OCI-LY7 (cell line): ENCODE measurements at regions of chr17 and their contacts with region 1.

Region 1: GRCh38 chr17:16537130-16537458 is 31.9 kb downstream of the ZNF287 start:
- DNase-seq: no peak
- H3K4me3 ChIP-seq: no peak overlapping the region
- H3K27ac ChIP-seq: no peak overlapping the region
- H3K4me1 ChIP-seq: peaks cover 14% of the 10 kb centered on the region
- CTCF ChIP-seq: peak; percentile 41; the same call in 1 of the 2 replicates

Region 2: DNA sequence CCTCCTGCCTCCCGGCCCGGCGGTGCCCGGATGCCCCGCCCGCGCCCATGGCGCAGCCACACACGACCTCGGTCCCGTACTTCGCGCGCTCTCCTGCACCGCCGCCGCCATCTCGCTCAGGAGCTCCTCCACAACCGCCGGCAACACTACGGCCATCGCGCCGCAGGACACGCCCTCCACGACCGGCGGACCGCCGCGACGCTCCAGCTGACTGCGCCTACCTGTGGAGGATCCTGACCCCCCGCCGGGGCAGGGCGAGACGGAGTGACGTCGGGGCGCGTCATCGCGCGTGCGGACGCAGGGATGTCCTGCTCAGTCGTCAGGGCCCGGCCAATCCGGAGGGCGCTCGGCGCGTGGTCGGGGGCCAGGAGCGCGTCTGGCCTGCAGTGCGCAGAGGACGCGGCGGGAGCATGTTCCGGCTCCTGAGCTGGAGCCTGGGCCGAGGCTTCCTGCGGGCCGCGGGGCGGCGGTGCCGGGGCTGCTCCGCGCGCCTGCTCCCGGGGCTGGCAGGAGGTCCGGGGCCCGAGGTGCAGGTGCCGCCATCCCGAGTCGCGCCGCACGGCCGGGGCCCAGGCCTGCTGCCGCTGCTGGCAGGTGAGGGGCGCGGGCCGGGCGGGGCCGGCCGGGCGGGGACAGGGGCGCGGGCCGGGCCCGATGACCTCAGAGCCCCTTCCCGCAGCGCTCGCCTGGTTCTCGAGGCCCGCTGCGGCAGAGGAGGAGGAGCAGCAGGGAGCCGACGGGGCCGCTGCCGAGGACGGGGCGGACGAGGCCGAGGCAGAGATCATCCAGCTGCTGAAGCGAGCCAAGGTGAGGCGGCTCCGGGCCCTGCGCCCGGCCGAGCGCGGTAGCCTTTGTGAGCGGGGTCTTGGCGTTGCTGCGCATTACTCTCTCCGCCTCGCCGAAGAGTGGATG is 537.4 kb before region 1 on chr17 and contains the starts of genes TTC19 and ZSWIM7:
- CTCF ChIA-PET with region 1: no interaction called
- POLR2A ChIA-PET with region 1: no interaction called
- intact Hi-C with region 1: loop called (anchors 2 kb)
- DNase-seq: peak; percentile 96
- H3K4me3 ChIP-seq: peak within 1 kb of the TSS; percentile 94
- H3K27ac ChIP-seq: peak within 1 kb of the TSS; percentile 85
- H3K4me1 ChIP-seq: peaks cover 14% of the 10 kb centered on the region
- CTCF ChIP-seq: no peak
- total RNA-seq, gene TTC19: 42.0 and 57.3 TPM in 2 replicates
- total RNA-seq, gene ZSWIM7: 27.2 and 34.7 TPM in 2 replicates

Region 3: DNA sequence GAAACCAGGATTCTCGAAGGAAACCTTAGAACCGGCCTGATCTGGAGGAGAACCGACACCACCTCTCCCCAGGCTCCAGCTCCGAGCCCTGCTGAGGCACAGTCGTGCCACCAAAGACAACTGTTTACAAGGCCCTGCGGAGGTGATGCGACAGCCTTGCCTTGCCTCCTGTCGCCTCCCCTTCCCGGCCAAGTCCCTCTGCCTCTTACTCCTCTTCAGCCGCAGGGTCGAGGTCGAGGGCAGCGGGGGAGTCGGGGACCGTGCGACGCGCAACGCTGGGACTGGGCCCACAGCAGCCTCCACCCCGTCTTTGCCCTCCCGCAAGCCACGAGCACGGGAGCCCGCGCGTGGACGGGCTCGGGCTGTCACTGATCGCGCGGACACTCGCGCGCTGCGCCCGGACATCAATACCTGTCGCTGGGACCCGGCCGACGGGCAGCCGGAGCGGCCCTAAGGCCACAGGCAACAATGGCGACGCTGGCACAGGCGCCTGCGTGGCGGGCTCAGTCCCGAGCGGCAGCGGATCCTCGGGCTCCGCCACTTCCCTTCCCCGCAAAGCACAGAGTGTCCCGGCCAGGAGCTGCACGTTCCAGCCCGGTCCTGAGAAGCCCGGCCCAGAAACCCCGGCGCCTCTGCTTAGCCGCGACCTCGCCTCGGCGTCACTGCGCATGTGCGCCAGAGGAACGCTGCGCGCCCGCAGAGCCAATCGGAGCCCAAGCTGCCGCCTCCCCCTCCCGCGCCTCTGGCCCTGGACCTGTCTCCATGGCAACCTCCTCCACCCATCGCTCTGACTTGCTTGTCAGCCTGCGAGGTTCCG is 31.7 kb after region 1 on chr17 and contains the start of gene ZNF287:
- CTCF ChIA-PET with region 1: no interaction called
- POLR2A ChIA-PET with region 1: interaction called, 13 read pairs
- intact Hi-C with region 1: no loop called
- DNase-seq: peak; percentile 89
- H3K4me3 ChIP-seq: peak within 1 kb of the TSS; percentile 70
- H3K27ac ChIP-seq: no peak within 1 kb of the TSS
- H3K4me1 ChIP-seq: peaks cover 8% of the 10 kb centered on the region
- CTCF ChIP-seq: no peak
- total RNA-seq, gene ZNF287: 4.5 and 8.5 TPM in 2 replicates

Region 4: DNA sequence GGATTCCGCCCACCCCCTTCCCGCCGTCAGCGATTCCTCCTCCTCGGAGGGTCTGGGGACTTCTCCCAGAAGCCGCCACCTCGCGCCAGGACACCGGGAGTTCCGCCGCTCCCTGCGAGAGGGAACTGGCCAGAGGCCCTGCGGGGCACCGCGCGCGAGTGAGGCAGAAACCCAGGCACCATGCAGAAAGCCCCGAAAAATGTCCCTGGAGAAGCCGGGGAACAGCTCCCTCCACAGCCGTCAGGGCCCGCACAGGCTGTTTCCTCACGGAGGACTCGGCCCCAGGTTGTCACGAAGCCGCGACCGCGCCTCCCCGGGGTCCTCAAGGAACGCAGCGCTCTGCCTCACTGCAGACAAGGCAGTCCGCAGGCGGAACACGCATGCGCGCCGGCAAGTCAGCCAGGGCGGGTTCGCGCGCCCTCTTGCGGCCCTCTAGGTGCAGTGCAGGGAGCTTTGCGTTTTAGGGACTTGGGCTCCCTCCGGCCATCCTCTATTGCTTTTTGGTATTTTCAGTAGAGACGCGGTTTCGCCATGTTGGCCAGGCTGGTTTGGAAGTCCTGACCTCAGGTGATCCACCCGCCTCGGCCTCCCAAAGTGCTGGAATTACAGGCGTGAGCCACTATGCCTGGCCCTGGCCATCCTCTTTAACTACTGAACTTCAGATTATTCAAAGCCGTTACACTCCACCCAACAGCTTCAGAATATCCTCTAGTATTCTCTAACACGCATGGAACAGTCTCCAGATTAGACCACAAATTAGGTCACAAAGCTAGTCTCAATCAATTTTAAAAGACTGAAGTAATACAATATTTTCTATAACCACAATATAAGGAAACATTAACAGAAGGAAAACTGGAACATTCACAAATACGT is 52.2 kb after region 1 on chr17:
- CTCF ChIA-PET with region 1: no interaction called
- POLR2A ChIA-PET with region 1: no interaction called
- intact Hi-C with region 1: loop called (anchors 2 kb)
- DNase-seq: peak; percentile 74
- H3K4me3 ChIP-seq: no peak overlapping the region
- H3K27ac ChIP-seq: no peak overlapping the region
- H3K4me1 ChIP-seq: no peaks in the 10 kb centered on the region
- CTCF ChIP-seq: peak; percentile 86

Region 5: DNA sequence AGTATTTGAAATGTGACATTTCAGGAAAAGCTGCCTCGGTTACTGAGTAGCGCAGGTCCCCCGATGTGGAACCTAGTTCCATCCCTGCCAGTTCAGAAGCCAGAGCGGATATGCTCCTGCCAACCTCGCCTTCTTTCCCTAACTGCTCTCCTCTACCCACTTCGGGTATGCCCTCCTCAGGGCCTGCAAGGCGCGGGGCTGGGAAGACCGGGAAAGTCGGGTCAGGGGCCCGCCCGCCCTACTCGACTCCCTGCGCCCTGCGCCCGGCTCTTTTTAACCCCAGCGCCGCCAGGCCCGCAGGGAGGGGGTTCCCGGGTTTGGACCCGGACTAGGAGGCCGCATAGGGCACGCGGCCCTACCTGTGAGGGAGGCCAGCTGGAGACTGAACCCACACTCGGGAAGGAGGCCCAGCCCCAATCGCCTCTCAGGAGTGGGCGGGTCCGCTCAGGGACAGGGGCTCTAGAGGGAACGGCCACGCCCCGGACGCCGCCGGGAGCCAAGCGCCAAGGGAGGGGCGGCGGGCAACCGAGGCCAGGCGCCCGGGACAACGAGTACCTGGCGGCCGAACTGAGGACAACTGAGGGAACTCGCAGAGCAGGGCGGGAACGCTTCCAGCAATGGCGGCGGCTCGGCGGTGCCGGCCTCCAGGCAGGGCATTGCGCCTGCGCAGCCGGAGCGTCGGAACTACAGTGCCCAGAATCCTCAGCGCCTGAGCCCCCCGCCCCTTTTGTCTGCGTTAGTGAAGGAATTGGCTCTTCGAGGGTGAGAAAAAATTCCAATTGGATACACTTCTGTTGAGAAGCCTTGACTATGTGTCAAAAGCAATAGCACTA is 116.3 kb after region 1 on chr17 and contains the start of gene ZNF624:
- CTCF ChIA-PET with region 1: no interaction called
- POLR2A ChIA-PET with region 1: no interaction called
- intact Hi-C with region 1: loop called (anchors 10 kb)
- DNase-seq: peak; percentile 93
- H3K4me3 ChIP-seq: peak within 1 kb of the TSS; percentile 84
- H3K27ac ChIP-seq: peak within 1 kb of the TSS; percentile 38
- H3K4me1 ChIP-seq: peaks cover 6% of the 10 kb centered on the region
- CTCF ChIP-seq: no peak
- total RNA-seq, gene ZNF624: 3.5 and 4.0 TPM in 2 replicates